ENCODE measurements at regions of chr3 and their contacts with region 1.

Region 1: DNA sequence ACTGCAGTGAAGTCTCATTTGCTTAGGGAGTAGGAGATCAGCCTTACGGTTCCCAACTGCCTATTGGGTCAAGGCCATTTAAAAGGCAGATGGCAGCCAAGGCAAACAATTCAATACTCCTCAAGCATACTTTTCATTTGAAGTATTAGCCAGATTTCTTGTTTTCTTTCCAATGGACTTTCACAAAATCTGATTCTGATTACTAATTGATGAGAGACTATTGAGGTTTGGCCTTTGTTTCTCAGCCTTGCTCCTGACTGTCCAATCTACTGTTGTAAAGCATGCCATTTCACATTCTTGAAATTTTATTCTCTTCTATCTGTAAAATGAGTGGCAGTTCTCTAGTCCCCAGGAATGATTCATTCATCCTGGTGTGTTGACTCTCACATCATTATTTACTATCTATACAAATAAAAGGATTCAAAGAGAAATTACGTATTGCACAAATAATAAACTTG is 166.2 kb upstream of the TGFBR2 start:
- DNase-seq: no peak
- H3K4me3 ChIP-seq: no peak overlapping the region
- H3K27ac ChIP-seq: peak overlapping the region; percentile 12 to 44
- H3K4me1 ChIP-seq: no peaks in the 10 kb centered on the region
- H3K27me3 ChIP-seq: no peaks in the 10 kb centered on the region
- CTCF ChIP-seq: no peak
- POLR2A ChIP-seq: no peak

Region 2: DNA sequence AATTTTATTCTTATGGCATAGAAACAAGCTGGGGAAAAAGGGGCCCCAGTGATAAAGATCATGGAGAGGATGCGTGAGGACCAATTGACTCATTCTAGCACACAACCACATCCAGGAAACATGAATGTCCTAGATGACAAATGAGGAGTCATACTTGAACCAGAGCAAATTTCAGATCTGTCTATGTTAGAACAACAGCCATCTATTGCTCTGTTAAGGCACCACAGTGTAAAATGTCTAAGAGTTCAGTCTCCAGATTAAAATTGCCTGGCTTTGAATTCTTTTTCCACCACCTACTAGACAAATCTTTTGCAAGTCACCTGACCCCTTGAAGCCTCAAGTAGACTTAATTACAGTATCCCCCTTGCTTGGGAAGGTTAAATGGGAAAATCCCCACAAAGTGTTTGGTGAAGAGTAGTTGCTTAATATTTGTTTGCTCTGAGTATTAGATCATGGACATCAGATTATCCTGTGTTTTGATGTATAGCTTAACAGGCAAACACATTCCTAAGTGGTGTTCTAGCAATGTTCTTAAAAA is 92.4 kb before region 1 on chr3:
- intact Hi-C with region 1: no loop called
- DNase-seq: no peak
- H3K4me3 ChIP-seq: no peak overlapping the region
- H3K27ac ChIP-seq: no peak overlapping the region
- H3K4me1 ChIP-seq: no peaks in the 10 kb centered on the region
- H3K27me3 ChIP-seq: no peaks in the 10 kb centered on the region
- CTCF ChIP-seq: no peak
- POLR2A ChIP-seq: no peak

Region 3: DNA sequence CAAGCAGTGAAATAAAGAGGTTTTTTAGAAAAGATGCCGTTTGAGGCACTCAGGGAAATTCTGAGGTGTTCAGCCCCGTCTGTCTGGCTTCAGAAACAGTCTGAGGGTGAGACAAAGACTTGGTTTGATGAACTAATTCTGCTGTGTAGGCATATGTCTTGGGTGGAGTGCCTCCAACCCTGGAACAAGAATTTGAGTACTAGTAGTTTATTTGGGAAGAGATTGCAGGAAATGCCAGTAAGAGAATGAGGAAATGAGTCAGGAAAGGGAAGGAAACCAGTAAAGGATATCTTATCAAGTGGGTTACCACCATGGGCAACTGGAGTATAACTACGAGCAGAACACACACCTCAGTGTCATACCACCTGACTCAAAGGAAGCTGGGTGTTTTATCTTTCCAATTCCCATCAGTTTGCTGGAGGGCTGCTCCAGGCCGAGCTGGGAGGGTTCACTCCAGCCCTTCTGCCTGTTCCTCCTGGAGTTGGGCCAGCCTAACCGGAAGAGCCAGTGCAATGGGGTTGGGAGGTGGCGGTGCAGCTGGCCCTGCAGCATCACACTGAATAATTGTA is 241.6 kb after region 1 on chr3:
- intact Hi-C with region 1: loop called (anchors 5 kb)
- DNase-seq: no peak
- H3K4me3 ChIP-seq: no peak overlapping the region
- H3K27ac ChIP-seq: peak overlapping the region in 1 of 2 donors; percentile 40
- H3K4me1 ChIP-seq: no peaks in the 10 kb centered on the region
- H3K27me3 ChIP-seq: no peaks in the 10 kb centered on the region
- CTCF ChIP-seq: no peak
- POLR2A ChIP-seq: no peak

Measured in prostate gland (tissue), 2 donors.